Activated naive CD4-positive, alpha-beta T cell treated with anti-CD3 and anti-CD28 coated beads for 36 hours (primary cell): ENCODE measurements at regions of chr11 and their contacts with region 1.

Region 1: DNA sequence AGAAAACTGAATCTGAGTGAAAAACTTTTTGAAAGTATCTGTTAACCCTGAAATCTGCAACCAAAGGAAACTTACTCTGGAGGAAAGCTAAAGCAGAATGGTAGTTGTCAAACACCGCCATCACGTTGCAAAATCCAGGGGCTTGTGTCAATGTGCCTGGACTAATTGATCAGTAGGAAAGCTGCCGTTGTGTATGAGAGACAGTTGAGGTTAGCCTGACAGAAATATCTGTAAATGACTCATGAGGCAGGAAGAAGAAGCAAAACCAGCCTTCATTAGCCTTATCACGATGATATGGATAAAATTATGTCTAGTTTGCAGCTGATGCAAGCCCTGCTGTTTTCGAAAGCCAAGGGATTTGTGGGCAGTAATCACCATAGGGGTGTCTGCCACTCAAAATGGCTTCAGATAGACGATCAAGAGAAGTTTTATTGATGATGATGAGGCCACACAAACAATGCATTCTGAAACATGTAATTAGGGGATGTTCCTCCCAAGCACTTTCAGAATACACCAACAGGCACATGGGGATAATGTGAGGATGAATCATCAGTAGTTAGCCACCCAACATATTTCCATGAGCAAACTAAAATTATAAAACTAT is 8.9 kb downstream of the SCGB1A1 start:
- DNase-seq: peak; percentile 28
- H3K4me3 Mint-ChIP-seq: peak overlapping the region; percentile 0
- H3K27ac Mint-ChIP-seq: peak overlapping the region; percentile 54
- H3K4me1 Mint-ChIP-seq: peaks cover 28% of the 10 kb centered on the region
- H3K27me3 Mint-ChIP-seq: no peaks in the 10 kb centered on the region

Region 2: GRCh38 chr11:62054484-62055121 is 373.1 kb before region 1 on chr11:
- CTCF ChIA-PET with region 1: no interaction called
- intact Hi-C with region 1: no loop called
- DNase-seq: peak; percentile 40
- H3K4me3 Mint-ChIP-seq: no peak overlapping the region
- H3K27ac Mint-ChIP-seq: no peak overlapping the region
- H3K4me1 Mint-ChIP-seq: no peaks in the 10 kb centered on the region
- H3K27me3 Mint-ChIP-seq: no peaks in the 10 kb centered on the region

Region 3: GRCh38 chr11:62370743-62371440 is 56.8 kb before region 1 on chr11:
- CTCF ChIA-PET with region 1: no interaction called
- intact Hi-C with region 1: no loop called
- DNase-seq: peak; percentile 59
- H3K4me3 Mint-ChIP-seq: peak overlapping the region; percentile 58
- H3K27ac Mint-ChIP-seq: peak overlapping the region; percentile 77
- H3K4me1 Mint-ChIP-seq: peaks cover 3% of the 10 kb centered on the region
- H3K27me3 Mint-ChIP-seq: no peaks in the 10 kb centered on the region

Region 4: GRCh38 chr11:62394825-62395538 is 32.8 kb before region 1 on chr11:
- CTCF ChIA-PET with region 1: interaction called, 20 read pairs
- intact Hi-C with region 1: no loop called
- DNase-seq: peak; percentile 67
- H3K4me3 Mint-ChIP-seq: no peak overlapping the region
- H3K27ac Mint-ChIP-seq: no peak overlapping the region
- H3K4me1 Mint-ChIP-seq: peaks cover 17% of the 10 kb centered on the region
- H3K27me3 Mint-ChIP-seq: no peaks in the 10 kb centered on the region

Region 5: DNA sequence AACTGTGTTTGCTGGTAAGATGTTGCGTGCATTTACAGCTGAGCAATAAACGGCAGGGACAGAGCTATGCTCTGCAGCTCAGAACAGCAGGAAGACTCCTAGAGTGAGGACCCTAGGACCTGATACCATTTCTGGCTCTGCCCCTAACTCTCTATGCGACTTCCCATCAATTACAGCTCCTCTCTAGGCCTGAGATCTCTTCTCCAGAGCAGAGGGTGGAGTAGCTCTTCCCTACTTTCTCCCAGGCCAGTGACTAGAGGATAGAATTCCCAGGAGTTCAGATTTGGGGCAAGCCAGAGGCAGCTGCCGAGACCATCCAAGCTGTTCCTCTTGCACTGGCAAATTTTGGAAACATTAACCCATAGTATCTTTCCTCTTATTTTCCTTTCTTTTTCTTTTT is 21.7 kb before region 1 on chr11:
- CTCF ChIA-PET with region 1: interaction called, 12 read pairs
- intact Hi-C with region 1: no loop called
- DNase-seq: no peak
- H3K4me3 Mint-ChIP-seq: no peak overlapping the region
- H3K27ac Mint-ChIP-seq: no peak overlapping the region
- H3K4me1 Mint-ChIP-seq: peaks cover 20% of the 10 kb centered on the region
- H3K27me3 Mint-ChIP-seq: no peaks in the 10 kb centered on the region

Region 6: DNA sequence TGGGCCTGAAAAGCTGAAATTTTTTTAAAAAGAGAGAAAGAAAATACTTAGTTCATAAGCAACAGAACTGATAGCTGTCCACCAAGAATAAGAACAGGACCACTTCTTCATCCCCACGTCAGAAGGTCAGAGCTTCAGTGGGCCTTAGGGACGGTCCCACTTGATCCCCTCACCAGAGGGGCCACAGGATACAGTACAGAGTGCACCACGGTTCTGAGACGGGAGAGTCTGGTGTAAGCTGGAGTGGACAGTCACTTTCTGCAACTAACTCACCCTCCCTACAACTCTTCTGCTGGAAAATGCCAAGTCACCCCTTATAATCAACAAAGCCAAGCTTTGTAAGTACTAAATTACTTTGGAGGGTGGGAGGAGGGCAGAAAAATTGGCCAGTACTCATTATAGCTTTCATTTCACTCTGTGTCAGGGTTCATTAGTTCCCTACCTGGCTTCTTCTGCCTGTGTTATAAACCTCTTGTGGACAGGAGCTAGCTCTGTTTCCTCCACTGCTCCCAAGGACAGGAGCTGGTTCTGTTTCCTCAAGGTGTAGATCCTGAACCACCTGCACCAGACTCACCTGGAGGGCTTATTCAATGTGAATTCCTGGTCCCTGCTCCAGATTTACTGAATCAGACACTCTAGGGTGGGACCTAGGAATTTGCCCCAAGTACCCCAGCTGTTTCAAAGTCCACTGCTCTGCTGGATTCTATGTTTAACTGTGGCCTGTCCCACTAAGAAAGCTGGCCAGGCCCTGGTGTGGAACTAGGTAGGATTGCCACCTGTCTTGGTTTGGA is 30.7 kb after region 1 on chr11:
- CTCF ChIA-PET with region 1: interaction called, 11 read pairs
- intact Hi-C with region 1: no loop called
- DNase-seq: no peak
- H3K4me3 Mint-ChIP-seq: no peak overlapping the region
- H3K27ac Mint-ChIP-seq: no peak overlapping the region
- H3K4me1 Mint-ChIP-seq: no peaks in the 10 kb centered on the region
- H3K27me3 Mint-ChIP-seq: no peaks in the 10 kb centered on the region

Region 7: GRCh38 chr11:62694455-62695167 is 266.9 kb after region 1 on chr11:
- CTCF ChIA-PET with region 1: interaction called, 11 read pairs
- intact Hi-C with region 1: loop called (anchors 2 kb)
- DNase-seq: peak; percentile 85
- H3K4me3 Mint-ChIP-seq: no peak overlapping the region
- H3K27ac Mint-ChIP-seq: peak overlapping the region; percentile 4
- H3K4me1 Mint-ChIP-seq: no peaks in the 10 kb centered on the region
- H3K27me3 Mint-ChIP-seq: no peaks in the 10 kb centered on the region